Heart left ventricle (tissue), 16 donors: ENCODE measurements at regions of chr2 and their contacts with region 1.

Region 1: DNA sequence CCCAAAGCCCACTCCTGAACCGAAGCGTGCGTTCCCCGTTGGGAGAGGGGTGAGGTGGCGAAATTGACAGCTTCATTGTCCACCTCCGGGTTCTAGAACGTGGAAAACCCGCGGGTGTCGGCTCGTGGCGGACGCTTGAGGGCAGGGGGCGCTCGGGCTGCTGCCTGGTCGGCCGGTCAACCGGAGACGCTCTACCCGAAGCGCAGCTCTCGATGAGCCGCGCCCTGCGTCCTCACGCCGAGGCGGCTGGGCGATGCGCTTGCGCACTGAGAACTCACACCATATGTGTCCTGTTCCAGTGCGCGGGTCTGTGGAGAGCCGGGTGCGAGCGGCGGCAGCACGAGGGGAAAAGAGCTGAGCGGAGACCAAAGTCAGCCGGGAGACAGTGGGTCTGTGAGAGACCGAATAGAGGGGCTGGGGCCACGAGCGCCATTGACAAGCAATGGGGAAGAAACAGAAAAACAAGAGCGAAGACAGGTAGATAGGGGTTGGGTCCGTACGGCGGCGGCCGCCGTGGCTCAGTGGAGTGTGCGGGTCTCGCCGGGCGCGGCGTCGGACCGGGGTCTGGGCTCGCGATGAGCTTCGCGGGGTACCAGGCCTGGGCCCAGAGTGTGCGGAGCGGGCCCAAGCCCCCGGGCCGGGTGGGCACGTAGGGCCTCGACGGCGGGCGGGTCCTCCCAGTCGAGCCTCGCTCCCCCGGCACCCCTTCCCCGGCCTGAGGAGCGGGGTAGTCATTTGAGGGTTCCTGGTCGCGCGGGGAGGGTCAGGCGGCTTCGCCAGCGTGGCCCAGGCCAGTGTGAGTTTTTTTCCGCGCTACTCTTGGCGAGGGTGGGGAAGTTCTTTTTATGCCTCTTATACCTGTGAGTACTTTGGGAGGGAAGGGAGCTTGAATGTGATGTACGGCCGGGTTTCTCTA is at the start of gene EIF5B:
- DNase-seq: peak; percentile 96 to 99 (median 98)
- ATAC-seq: peak; percentile 89 to 94 (median 92)
- H3K4me3 ChIP-seq: peak within 1 kb of the TSS; percentile 48 to 96 (median 82)
- H3K27ac ChIP-seq: peak within 1 kb of the TSS; percentile 76 to 97 (median 92)
- H3K4me1 ChIP-seq: peaks cover 3 to 61% (median 36%) of the 10 kb centered on the region in 12 donors
- H3K27me3 ChIP-seq: no peaks in the 10 kb centered on the region
- CTCF ChIP-seq: peak; percentile 36 to 95 (median 74)
- POLR2A ChIP-seq: peak in 1 of 2 donors; percentile 59
- total RNA-seq, gene EIF5B: 56.1 to 165 (median 86.8) TPM

Region 2: DNA sequence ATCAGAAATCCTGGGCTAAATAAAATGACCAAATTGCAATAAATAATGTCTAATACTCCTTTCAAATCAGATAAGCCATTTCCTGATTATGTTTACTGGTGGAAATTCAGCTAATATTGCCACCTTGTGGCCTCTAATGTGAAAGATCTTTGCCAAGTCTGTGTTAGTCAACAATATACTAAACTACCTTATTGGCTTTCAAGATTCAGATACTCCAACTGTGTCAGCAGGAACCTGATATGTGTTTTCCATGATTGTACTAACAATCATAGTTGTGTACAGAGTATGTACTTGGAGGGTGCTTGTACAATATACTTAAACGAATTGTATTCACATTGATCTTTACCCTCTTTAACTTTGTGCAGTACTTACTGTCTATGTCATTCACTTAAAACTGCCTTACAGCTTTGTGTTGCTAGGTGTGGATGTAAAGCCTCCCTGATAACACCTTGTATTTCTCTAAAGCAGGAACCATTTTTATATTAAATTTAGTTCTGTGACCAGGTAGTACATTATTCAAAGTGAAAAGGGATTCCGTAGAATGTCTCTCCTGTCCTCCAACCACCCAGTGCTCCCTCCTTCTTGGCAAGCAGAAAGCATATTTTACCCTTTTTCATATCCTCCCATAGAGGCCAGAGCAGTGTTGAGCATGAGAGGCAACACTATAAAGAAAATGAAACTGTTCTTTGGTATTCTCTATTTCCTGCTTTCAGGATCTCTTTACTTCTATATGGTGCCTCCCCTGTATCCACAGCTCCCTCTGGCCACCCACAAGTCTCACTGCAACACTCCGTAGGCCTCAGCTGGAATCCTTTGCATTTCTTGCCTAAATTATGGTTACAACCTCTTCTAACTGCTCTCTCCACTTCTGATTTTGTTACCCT is 271.1 kb before region 1 on chr2:
- intact Hi-C with region 1: no loop called
- DNase-seq: no peak
- ATAC-seq: peak in 3 of 4 donors; percentile 50 to 75 (median 66)
- H3K4me3 ChIP-seq: no peak overlapping the region
- H3K27ac ChIP-seq: peak overlapping the region in 1 of 12 donors; percentile 76
- H3K4me1 ChIP-seq: peaks cover 0 to 15% (median 0%) of the 10 kb centered on the region in 12 donors
- H3K27me3 ChIP-seq: no peaks in the 10 kb centered on the region
- CTCF ChIP-seq: peak in 11 of 12 donors; percentile 20 to 53 (median 36)
- POLR2A ChIP-seq: no peak

Region 3: GRCh38 chr2:99154643-99155536 is 182.5 kb before region 1 on chr2 and contains the starts of genes LIPT1 and TSGA10:
- intact Hi-C with region 1: loop called in 2 of 10 experiments (anchors 10 kb)
- DNase-seq: peak; percentile 93 to 95 (median 94)
- ATAC-seq: peak; percentile 98 to 99 (median 99)
- H3K4me3 ChIP-seq: peak within 1 kb of the TSS; percentile 51 to 84 (median 72)
- H3K27ac ChIP-seq: peak within 1 kb of the TSS; percentile 45 to 93 (median 90)
- H3K4me1 ChIP-seq: peaks cover 0 to 27% (median 16%) of the 10 kb centered on the region in 12 donors
- H3K27me3 ChIP-seq: no peaks in the 10 kb centered on the region
- CTCF ChIP-seq: peak in 4 of 12 donors; percentile 10 to 19 (median 15)
- POLR2A ChIP-seq: peak; percentile 21 to 83
- total RNA-seq, gene LIPT1: 5.3 to 10.9 (median 7.5) TPM
- total RNA-seq, gene TSGA10: 1.3 to 63.7 (median 2.9) TPM

Region 4: GRCh38 chr2:99169534-99169933 is 167.8 kb before region 1 on chr2:
- intact Hi-C with region 1: loop called in 1 of 10 experiments (anchors 10 kb)
- DNase-seq: no peak
- ATAC-seq: no peak
- H3K4me3 ChIP-seq: no peak overlapping the region
- H3K27ac ChIP-seq: no peak overlapping the region
- H3K4me1 ChIP-seq: no peaks in the 10 kb centered on the region
- H3K27me3 ChIP-seq: no peaks in the 10 kb centered on the region
- CTCF ChIP-seq: no peak
- POLR2A ChIP-seq: no peak

Region 5: DNA sequence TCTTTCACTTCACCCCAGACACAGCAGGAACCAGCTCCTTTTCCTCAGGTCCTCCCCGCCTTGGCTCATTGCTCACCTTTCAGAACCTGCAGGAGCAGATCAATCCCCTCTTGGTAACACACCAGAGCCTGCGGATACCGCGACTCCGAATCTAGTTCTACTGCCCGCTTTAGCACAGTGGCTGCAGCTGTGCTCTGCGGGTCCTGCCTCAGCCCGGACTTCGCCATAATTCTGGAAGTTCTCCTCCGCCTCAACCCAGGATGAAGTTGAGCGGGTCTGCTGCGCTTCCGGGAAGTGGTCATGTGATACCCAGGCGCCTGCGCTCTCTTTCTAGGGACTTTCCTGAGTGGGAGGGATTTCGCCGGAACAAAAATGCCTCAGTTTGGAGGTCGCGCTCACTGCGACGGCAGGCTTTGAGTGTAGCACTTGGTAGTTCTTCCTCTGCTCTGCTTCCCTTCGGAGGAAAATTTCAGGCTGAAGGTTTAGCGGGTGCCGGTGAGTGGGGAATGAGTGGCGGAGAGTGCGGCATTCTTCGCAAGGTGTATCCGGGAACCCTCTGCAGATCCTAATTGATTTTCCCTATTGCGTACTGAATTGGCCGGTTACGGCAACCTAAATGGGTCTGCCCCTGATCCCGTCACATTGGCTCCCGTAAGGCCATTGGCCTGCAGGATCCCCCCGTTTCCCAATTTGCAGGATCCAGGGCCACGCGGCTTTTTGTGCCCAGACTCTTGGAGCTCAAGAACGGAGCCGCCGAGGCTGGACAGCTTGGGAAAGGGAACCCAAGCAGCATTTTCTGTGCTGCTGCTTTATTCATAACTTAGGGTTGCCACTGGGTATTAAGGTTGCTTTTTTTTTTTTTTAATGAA is 156.4 kb before region 1 on chr2 and contains the starts of genes MITD1 and MRPL30:
- intact Hi-C with region 1: loop called in 9 of 10 experiments (anchors 1 to 10 kb)
- DNase-seq: peak; percentile 92 to 94 (median 93)
- ATAC-seq: peak; percentile 98 to 99 (median 98)
- H3K4me3 ChIP-seq: peak within 1 kb of the TSS; percentile 66 to 92 (median 80)
- H3K27ac ChIP-seq: peak within 1 kb of the TSS in 11 of 12 donors; percentile 57 to 92 (median 78)
- H3K4me1 ChIP-seq: peaks cover 4 to 56% (median 28%) of the 10 kb centered on the region in 12 donors
- H3K27me3 ChIP-seq: no peaks in the 10 kb centered on the region
- CTCF ChIP-seq: no peak
- POLR2A ChIP-seq: peak in 1 of 2 donors; percentile 77
- total RNA-seq, gene MITD1: 8.4 to 16.4 (median 14.0) TPM
- total RNA-seq, gene MRPL30: 26.4 to 38.3 (median 34.3) TPM

Region 6: DNA sequence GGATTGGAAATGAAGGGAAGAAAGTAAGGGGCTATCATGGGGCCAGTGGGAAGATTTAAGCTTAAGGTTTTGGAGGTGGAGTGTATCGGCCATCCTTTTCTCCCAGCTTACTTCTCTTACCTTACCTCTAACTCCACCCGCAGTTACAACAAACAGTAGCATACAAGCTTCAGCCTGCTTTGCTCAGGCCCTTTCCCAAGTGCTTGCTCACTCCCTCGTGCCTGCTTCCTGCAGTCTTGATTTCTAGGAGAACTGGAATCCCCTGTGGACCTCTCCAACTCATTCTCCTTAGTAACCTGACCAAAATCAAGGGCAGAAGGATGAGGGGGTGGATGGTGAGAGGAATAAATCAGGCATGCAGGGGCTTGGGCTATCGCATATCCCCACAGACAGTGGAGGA is 76.1 kb before region 1 on chr2:
- intact Hi-C with region 1: no loop called
- DNase-seq: no peak
- ATAC-seq: no peak
- H3K4me3 ChIP-seq: no peak overlapping the region
- H3K27ac ChIP-seq: no peak overlapping the region
- H3K4me1 ChIP-seq: no peaks in the 10 kb centered on the region
- H3K27me3 ChIP-seq: no peaks in the 10 kb centered on the region
- CTCF ChIP-seq: no peak
- POLR2A ChIP-seq: no peak

Region 7: GRCh38 chr2:99403524-99403923 is 66.2 kb after region 1 on chr2:
- intact Hi-C with region 1: loop called in 2 of 10 experiments (anchors 5 kb)
- DNase-seq: peak in 1 of 5 donors; percentile 53
- ATAC-seq: peak; percentile 22 to 65 (median 57)
- H3K4me3 ChIP-seq: peak overlapping the region in 4 of 12 donors; percentile 5 to 44 (median 28)
- H3K27ac ChIP-seq: peak overlapping the region in 11 of 12 donors; percentile 18 to 86 (median 65)
- H3K4me1 ChIP-seq: peaks cover 0 to 46% (median 10%) of the 10 kb centered on the region in 12 donors
- H3K27me3 ChIP-seq: no peaks in the 10 kb centered on the region
- CTCF ChIP-seq: peak in 5 of 12 donors; percentile 8 to 19 (median 17)
- POLR2A ChIP-seq: no peak